ENCODE measurements at regions of chr7 and their contacts with region 1.

Region 1: GRCh38 chr7:29408841-29409243 is 154.8 kb upstream of the PRR15 start:
- DNase-seq: peak in 2 of 4 donors; percentile 80 to 85
- ATAC-seq: peak; percentile 87
- H3K4me3 ChIP-seq: no peak overlapping the region
- H3K27ac ChIP-seq: no peak overlapping the region
- H3K4me1 ChIP-seq: no peaks in the 10 kb centered on the region
- H3K27me3 ChIP-seq: peaks cover 0 to 11% of the 10 kb centered on the region in 2 donors
- CTCF ChIP-seq: peak; percentile 74 to 90

Region 2: DNA sequence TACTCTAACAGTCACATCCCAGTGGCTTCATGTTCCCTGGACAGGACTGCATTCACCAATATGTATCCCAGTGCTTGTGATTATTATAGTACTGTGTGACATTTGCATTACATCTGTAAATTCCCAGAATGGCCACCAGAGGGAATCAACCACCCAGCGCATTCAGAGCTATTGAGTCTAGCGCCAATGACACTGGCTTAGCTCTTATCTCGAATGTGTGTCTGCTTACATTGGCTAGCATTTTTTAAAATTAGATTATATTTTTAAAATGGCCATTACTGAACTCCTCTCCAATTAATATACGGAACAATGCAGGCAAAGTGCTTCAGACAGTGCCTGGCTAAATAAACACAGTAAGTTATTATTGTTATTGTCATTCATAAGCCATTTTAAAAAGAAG is 487.0 kb before region 1 on chr7:
- intact Hi-C with region 1: loop called (anchors 5 to 10 kb)
- DNase-seq: peak in 2 of 4 donors; percentile 57 to 77
- ATAC-seq: peak; percentile 98
- H3K4me3 ChIP-seq: no peak overlapping the region
- H3K27ac ChIP-seq: no peak overlapping the region
- H3K4me1 ChIP-seq: peaks cover 0 to 20% of the 10 kb centered on the region in 2 donors
- H3K27me3 ChIP-seq: peaks cover 0 to 10% of the 10 kb centered on the region in 2 donors
- CTCF ChIP-seq: peak; percentile 69 to 89

Region 3: GRCh38 chr7:28926871-28927597 is 481.8 kb before region 1 on chr7:
- intact Hi-C with region 1: loop called (anchors 5 to 10 kb)
- DNase-seq: peak; percentile 70 to 93 (median 84)
- ATAC-seq: peak; percentile 96
- H3K4me3 ChIP-seq: peak overlapping the region; percentile 29 to 42
- H3K27ac ChIP-seq: no peak overlapping the region
- H3K4me1 ChIP-seq: peaks cover 0 to 22% of the 10 kb centered on the region in 2 donors
- H3K27me3 ChIP-seq: peaks cover 0 to 10% of the 10 kb centered on the region in 2 donors
- CTCF ChIP-seq: peak; percentile 73 to 87

Region 4: DNA sequence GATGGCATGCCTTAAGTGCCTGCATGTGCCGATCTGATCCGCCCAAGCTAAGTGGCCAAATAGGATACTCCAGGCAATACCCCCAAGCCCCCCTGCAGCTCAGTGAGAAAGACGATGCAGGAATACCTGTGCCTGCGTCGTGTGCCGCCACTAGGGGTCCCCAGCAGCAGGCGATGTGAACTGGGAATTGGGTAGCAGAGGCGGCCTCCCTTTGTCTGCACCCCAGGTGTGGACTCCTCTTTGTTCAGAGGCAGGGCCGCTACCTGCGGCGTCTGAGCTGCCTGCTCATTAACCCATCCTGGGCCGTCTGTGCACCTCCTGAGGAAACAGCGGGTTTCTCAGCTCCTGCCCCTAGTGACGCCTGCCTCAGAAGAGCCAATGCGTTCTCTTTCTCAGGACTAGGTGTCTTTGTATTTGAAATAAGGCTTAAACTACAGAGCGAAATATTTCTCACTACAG is 219.1 kb before region 1 on chr7:
- intact Hi-C with region 1: loop called in 1 of 2 experiments (anchors 10 kb)
- DNase-seq: peak; percentile 33 to 84 (median 62)
- ATAC-seq: peak; percentile 88
- H3K4me3 ChIP-seq: no peak overlapping the region
- H3K27ac ChIP-seq: no peak overlapping the region
- H3K4me1 ChIP-seq: peaks cover 4 to 24% of the 10 kb centered on the region in 2 donors
- H3K27me3 ChIP-seq: peaks cover 6 to 42% of the 10 kb centered on the region in 2 donors
- CTCF ChIP-seq: peak; percentile 63 to 78

Region 5: GRCh38 chr7:29228289-29229011 is 180.4 kb before region 1 on chr7:
- intact Hi-C with region 1: no loop called
- DNase-seq: no peak
- ATAC-seq: no peak
- H3K4me3 ChIP-seq: no peak overlapping the region
- H3K27ac ChIP-seq: no peak overlapping the region
- H3K4me1 ChIP-seq: no peaks in the 10 kb centered on the region
- H3K27me3 ChIP-seq: no peaks in the 10 kb centered on the region
- CTCF ChIP-seq: no peak

Region 6: DNA sequence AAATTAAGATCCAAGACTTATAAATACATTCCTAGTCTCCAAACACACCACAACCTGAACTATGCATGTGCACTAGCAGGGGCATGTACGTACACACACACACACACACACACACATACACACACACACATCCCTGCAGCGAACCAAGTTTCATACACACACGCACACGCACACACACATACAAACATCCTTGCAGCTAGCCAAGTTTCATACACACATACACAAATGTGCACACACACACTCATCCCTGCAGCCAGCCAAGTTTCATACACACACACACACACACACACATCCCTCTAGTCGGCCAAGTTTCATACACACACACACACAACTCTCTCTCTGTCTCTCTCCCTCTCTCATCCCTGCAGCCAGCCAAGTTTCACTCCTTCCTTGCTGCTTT is 314.8 kb after region 1 on chr7:
- intact Hi-C with region 1: no loop called
- DNase-seq: peak in 2 of 4 donors; percentile 53 to 65
- ATAC-seq: no peak
- H3K4me3 ChIP-seq: no peak overlapping the region
- H3K27ac ChIP-seq: no peak overlapping the region
- H3K4me1 ChIP-seq: no peaks in the 10 kb centered on the region
- H3K27me3 ChIP-seq: no peaks in the 10 kb centered on the region
- CTCF ChIP-seq: no peak